B cell (primary cell): ENCODE measurements at regions of chr22 and their contacts with region 1.

Region 1: GRCh38 chr22:36387752-36388518 is at the start of gene MYH9:
- DNase-seq: peak; percentile 99
- ATAC-seq: peak; percentile 81
- H3K4me3 ChIP-seq: peak within 1 kb of the TSS; percentile 67 to 95 (median 87)
- H3K4me3 Mint-ChIP-seq: peak within 1 kb of the TSS; percentile 98
- H3K27ac ChIP-seq: peak within 1 kb of the TSS; percentile 79 to 93
- H3K27ac Mint-ChIP-seq: peak within 1 kb of the TSS; percentile 92
- H3K4me1 ChIP-seq: peaks cover 57 to 70% of the 10 kb centered on the region in 2 donors
- H3K4me1 Mint-ChIP-seq: peaks cover 54% of the 10 kb centered on the region
- H3K27me3 ChIP-seq: no peaks in the 10 kb centered on the region
- H3K27me3 Mint-ChIP-seq: no peaks in the 10 kb centered on the region
- CTCF ChIP-seq: no peak
- total RNA-seq, gene MYH9: 552 and 554 TPM in 2 replicates

Region 2: DNA sequence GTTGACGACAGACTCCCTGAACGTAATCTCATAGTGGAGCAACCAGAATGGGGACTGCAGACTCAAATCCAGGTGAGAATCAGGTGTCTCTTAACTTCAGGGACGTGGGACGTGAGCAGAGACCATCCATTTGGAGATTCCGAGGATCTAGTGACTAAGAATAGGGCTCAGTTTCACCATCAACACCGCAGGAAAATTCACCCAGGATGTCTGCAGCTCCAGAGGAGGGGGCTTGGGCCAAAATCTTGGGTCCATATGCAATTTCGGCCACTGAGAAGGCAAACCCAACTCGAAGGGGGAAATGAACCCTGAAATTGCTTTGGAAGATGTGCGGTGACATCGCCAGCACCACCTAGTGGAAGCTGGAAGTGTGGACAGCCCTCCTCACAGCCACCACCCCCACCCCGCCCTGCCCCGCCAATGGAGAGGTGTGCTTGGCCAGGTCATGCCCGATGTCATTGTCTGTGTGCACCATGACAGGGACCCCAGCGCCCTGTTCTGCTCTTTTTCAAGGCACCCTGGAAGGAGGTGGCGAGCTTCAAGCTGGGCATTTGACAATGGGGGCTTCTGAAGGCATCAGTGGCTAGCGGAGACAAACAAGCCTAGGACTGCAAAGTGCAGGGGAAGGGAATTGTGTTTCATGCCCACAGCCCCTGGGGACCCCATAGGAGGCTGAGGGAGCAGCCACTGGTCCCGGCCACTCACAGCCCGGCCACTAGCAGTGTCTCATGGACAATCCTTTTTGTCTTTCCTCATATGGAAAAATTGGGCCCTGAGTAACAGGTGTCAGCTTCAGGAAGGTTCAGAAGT is 110.2 kb before region 1 on chr22:
- CTCF ChIA-PET with region 1: no interaction called
- POLR2A ChIA-PET with region 1: no interaction called
- intact Hi-C with region 1: no loop called
- DNase-seq: peak; percentile 82
- ATAC-seq: peak; percentile 95
- H3K4me3 ChIP-seq: no peak overlapping the region
- H3K4me3 Mint-ChIP-seq: no peak overlapping the region
- H3K27ac ChIP-seq: no peak overlapping the region
- H3K27ac Mint-ChIP-seq: peak overlapping the region; percentile 38
- H3K4me1 ChIP-seq: peaks cover 9 to 13% of the 10 kb centered on the region in 2 donors
- H3K4me1 Mint-ChIP-seq: peaks cover 14% of the 10 kb centered on the region
- H3K27me3 ChIP-seq: no peaks in the 10 kb centered on the region
- H3K27me3 Mint-ChIP-seq: no peaks in the 10 kb centered on the region
- CTCF ChIP-seq: peak; percentile 87

Region 3: DNA sequence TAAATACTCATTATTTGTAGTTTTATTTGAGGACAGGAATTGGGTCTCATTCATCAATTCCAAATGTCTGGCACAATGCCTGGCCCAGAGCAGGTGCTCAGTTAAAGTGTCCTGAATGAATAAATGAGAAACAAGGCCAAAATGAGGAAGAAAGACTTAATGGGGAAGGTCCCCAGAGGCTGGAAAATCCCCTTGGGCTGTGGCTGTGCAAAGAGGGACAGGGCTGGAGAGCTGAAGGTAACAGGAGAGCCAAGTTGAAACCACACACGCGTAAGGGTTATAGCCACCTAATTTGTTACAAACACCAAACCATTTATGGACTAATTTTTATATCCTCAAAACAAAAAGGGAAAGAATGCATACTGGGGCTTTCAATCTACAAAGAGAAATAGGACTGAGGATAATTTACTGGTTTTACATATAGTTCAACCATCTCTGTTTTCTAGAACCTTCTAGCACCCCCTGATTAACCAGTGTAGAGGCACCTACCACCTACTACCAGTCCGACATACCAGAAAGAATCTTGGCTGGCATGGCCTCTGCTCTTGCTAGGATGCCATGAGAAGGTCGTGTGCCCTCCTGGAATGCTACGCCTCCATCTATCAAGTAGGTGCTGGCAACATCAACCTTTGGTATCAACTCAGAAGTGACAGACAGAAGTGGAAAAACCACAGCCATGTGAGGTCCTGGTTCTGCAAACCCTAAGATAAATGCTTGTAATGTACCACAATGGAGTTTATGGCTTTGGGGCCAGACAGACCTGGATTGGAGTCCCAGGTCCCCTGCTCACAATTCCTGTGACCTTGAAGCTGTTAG is 28.5 kb before region 1 on chr22:
- CTCF ChIA-PET with region 1: no interaction called
- POLR2A ChIA-PET with region 1: interaction called, 7 read pairs
- intact Hi-C with region 1: loop called (anchors 1 kb)
- DNase-seq: peak; percentile 84
- ATAC-seq: peak; percentile 79
- H3K4me3 ChIP-seq: peak overlapping the region in 1 of 5 experiments; percentile 18
- H3K4me3 Mint-ChIP-seq: peak overlapping the region; percentile 74
- H3K27ac ChIP-seq: peak overlapping the region; percentile 56 to 92
- H3K27ac Mint-ChIP-seq: peak overlapping the region; percentile 81
- H3K4me1 ChIP-seq: peaks cover 95 to 98% of the 10 kb centered on the region in 2 donors
- H3K4me1 Mint-ChIP-seq: peaks cover 93% of the 10 kb centered on the region
- H3K27me3 ChIP-seq: no peaks in the 10 kb centered on the region
- H3K27me3 Mint-ChIP-seq: no peaks in the 10 kb centered on the region
- CTCF ChIP-seq: no peak

Region 4: DNA sequence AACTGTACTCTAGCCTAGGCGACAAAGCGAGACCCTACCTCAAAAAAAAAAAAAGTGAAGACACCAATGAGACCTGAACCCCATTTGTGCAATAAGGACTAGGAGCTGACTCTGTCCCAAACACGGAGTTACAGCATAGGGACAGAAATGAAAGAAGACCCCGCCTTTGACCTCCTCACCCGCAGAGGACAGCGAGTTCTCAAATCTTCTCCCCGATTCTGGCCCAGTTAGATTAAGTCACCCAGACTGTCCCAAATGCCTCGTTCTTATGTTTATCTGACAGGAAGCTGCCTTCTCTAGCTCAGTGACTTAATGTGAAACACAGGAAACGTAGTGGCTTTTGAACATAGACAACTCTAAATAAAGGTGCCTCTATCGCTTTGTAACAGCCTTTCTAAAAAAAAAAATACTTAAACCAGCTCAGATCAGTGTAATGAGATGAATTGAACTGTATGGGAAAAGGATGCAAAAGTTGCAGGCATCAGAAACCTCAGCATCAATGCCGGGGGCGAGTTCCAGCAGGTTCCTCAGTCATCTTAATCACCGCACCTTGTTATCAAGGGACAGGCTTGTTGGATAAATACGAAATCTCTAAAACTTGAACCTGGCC is 10.8 kb before region 1 on chr22:
- CTCF ChIA-PET with region 1: interaction called, 12 read pairs
- POLR2A ChIA-PET with region 1: interaction called, 13 read pairs
- intact Hi-C with region 1: loop called (anchors 1 kb)
- DNase-seq: peak; percentile 71
- ATAC-seq: peak; percentile 71
- H3K4me3 ChIP-seq: peak overlapping the region in 4 of 5 experiments; percentile 7 to 59 (median 38)
- H3K4me3 Mint-ChIP-seq: peak overlapping the region; percentile 70
- H3K27ac ChIP-seq: peak overlapping the region; percentile 88 to 90
- H3K27ac Mint-ChIP-seq: peak overlapping the region; percentile 88
- H3K4me1 ChIP-seq: peaks cover 98 to 99% of the 10 kb centered on the region in 2 donors
- H3K4me1 Mint-ChIP-seq: peaks cover 86% of the 10 kb centered on the region
- H3K27me3 ChIP-seq: no peaks in the 10 kb centered on the region
- H3K27me3 Mint-ChIP-seq: no peaks in the 10 kb centered on the region
- CTCF ChIP-seq: no peak

Region 5: GRCh38 chr22:36454916-36455570 is 67.1 kb after region 1 on chr22:
- CTCF ChIA-PET with region 1: interaction called, 5 read pairs
- POLR2A ChIA-PET with region 1: interaction called, 8 read pairs
- intact Hi-C with region 1: loop called (anchors 1 kb)
- DNase-seq: peak; percentile 96
- ATAC-seq: peak; percentile 62
- H3K4me3 ChIP-seq: peak overlapping the region; percentile 18 to 59 (median 54)
- H3K4me3 Mint-ChIP-seq: peak overlapping the region; percentile 77
- H3K27ac ChIP-seq: peak overlapping the region; percentile 84 to 93
- H3K27ac Mint-ChIP-seq: peak overlapping the region; percentile 91
- H3K4me1 ChIP-seq: peaks cover 50 to 60% of the 10 kb centered on the region in 2 donors
- H3K4me1 Mint-ChIP-seq: peaks cover 45% of the 10 kb centered on the region
- H3K27me3 ChIP-seq: no peaks in the 10 kb centered on the region
- H3K27me3 Mint-ChIP-seq: no peaks in the 10 kb centered on the region
- CTCF ChIP-seq: no peak

Region 6: DNA sequence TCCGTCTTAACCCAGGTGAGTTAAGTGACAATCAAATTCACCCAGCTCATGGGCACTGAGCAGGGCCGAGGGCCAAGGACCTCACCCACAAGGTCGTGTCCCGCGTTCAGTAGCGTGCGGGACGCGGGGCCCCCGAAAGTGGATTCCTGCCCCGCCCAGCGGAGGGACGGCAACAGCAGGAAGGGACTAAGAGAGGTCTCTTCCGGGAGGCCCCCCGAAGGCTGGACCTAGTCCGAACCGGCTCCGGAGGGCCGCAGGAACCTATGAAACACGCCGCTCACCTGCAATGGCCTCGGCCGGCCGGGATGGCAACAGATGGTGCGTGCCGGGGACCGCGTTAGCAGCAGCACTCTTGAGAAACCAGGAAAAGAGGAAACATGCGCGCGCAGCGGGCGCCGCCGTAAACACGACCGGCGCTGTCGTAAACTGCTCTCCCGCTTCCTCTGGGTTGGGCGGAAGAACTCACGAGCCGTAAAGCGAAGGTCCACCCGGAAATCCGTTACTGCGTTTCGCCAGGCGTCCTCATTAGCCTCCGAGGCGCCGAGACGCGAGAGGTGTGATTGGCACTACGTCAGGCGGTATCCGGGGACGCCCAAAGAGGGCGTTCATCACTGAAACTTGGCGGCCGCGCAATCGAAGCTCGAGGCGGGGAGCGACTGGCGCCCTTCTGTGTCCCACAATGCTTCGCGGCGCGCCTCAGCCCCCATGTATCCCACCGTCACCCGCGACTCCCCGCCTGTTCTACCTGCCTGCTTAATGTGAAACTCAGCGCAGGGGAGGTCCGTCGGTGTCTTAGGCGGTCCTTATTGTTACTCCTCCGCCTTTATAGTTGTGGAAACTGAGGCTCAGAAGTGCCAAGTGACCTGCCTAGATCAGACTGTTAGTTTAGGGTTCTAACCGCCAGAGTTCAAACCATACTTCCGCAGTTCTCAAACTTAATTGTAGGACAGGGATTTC is 141.1 kb after region 1 on chr22 and contains the start of gene EIF3D:
- CTCF ChIA-PET with region 1: no interaction called
- POLR2A ChIA-PET with region 1: no interaction called
- intact Hi-C with region 1: loop called (anchors 5 kb)
- DNase-seq: peak; percentile 100
- ATAC-seq: peak; percentile 92
- H3K4me3 ChIP-seq: peak within 1 kb of the TSS; percentile 80 to 97 (median 88)
- H3K4me3 Mint-ChIP-seq: peak within 1 kb of the TSS; percentile 98
- H3K27ac ChIP-seq: peak within 1 kb of the TSS; percentile 88 to 93
- H3K27ac Mint-ChIP-seq: peak within 1 kb of the TSS; percentile 98
- H3K4me1 ChIP-seq: peaks cover 13 to 24% of the 10 kb centered on the region in 2 donors
- H3K4me1 Mint-ChIP-seq: peaks cover 28% of the 10 kb centered on the region
- H3K27me3 ChIP-seq: no peaks in the 10 kb centered on the region
- H3K27me3 Mint-ChIP-seq: no peaks in the 10 kb centered on the region
- CTCF ChIP-seq: no peak
- total RNA-seq, gene EIF3D: 257 and 274 TPM in 2 replicates